Calu3 (cell line): ENCODE measurements at regions of chr1 and their contacts with region 1.

Region 1: GRCh38 chr1:180695282-180695681 is 63.5 kb downstream of the XPR1 start:
- DNase-seq: no peak
- H3K4me3 Mint-ChIP-seq: no peak overlapping the region
- H3K27ac Mint-ChIP-seq: no peak overlapping the region
- H3K4me1 Mint-ChIP-seq: no peaks in the 10 kb centered on the region
- H3K27me3 Mint-ChIP-seq: no peaks in the 10 kb centered on the region
- CTCF ChIP-seq: no peak

Region 2: GRCh38 chr1:180611016-180611930 is 84.0 kb before region 1 on chr1:
- CTCF ChIA-PET with region 1: no interaction called
- intact Hi-C with region 1: no loop called
- DNase-seq: no peak
- H3K4me3 Mint-ChIP-seq: no peak overlapping the region
- H3K27ac Mint-ChIP-seq: peak overlapping the region; percentile 62
- H3K4me1 Mint-ChIP-seq: peaks cover 24% of the 10 kb centered on the region
- H3K27me3 Mint-ChIP-seq: no peaks in the 10 kb centered on the region
- CTCF ChIP-seq: no peak

Region 3: DNA sequence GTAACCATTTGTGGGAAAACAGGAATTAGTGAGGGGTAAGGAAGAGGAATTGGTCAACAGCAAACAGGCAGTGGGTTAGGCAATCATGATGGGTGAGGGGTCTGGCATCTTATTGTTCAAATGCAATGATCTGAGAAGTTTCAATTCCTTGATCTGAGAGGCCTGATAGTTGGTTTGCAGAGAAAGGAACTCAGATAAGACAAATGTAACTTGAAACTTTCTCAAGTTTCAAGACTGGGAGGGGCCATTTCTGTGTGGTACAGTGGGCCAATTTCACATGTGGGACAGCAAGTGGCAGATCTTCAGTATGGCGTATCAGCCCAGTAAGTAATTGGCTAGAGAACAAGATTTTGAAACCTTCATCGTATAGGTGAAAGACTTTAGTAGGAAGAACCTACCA is 39.1 kb after region 1 on chr1:
- CTCF ChIA-PET with region 1: no interaction called
- intact Hi-C with region 1: loop called (anchors 5 kb)
- DNase-seq: no peak
- H3K4me3 Mint-ChIP-seq: no peak overlapping the region
- H3K27ac Mint-ChIP-seq: no peak overlapping the region
- H3K4me1 Mint-ChIP-seq: no peaks in the 10 kb centered on the region
- H3K27me3 Mint-ChIP-seq: no peaks in the 10 kb centered on the region
- CTCF ChIP-seq: no peak